Natural killer cell (primary cell): ENCODE measurements at regions of chr17 and their contacts with region 1.

Region 1: DNA sequence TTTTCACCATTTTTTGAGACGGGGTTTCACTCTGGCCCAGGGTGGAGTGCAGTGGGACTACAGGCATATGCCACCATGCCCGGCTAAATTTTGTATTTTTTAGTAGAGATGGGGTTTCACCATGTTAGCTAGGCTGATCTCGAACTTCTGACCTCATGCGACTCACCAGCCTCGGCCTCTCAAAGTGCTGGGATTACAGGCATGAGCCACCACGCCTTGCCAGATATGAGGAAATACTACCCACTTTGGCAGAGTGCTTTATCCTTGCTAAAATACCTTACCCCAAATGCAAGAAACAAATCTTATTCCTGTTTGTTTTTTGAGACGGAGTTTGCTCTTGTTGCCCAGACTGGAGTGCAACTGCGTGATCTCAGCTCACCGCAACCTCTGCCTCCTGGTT is 62.9 kb upstream of the MGAT5B start:
- DNase-seq: no peak
- ATAC-seq: no peak
- H3K4me3 ChIP-seq: no peak overlapping the region
- H3K4me3 Mint-ChIP-seq: no peak overlapping the region
- H3K27ac ChIP-seq: no peak overlapping the region
- H3K27ac Mint-ChIP-seq: no peak overlapping the region
- H3K4me1 ChIP-seq: no peaks in the 10 kb centered on the region
- H3K4me1 Mint-ChIP-seq: no peaks in the 10 kb centered on the region
- H3K27me3 ChIP-seq: no peaks in the 10 kb centered on the region
- H3K27me3 Mint-ChIP-seq: no peaks in the 10 kb centered on the region
- CTCF ChIP-seq: no peak

Region 2: DNA sequence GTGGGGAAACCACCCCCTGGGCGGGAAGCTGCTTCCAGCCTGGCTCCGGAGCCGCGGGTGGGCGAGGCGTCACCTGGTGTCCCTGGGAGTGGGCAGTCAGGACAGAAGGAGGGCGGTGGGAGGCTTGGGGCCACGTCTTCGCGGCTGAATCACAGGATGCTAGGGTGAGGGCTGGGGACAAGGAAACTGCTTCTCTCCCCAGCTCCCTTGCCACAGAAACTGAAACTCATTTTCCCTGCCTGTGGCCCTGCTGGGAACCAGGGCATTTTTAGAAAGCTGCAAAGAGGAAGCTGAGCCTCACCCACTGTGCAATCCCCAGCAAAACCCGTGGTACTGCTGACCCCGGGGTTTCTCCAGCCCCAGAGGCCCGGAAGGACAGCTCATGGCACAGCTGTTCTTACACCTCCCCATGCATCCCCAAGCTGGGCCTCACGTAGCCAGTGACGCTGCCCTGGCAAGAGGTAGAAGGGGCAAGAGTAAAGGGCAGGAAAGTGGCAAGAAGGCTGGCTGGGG is 312.3 kb before region 1 on chr17:
- intact Hi-C with region 1: no loop called
- DNase-seq: peak; percentile 59 to 69
- ATAC-seq: peak; percentile 61 to 75 (median 65)
- H3K4me3 ChIP-seq: peak overlapping the region; percentile 25
- H3K4me3 Mint-ChIP-seq: peak overlapping the region; percentile 89
- H3K27ac ChIP-seq: peak overlapping the region; percentile 90
- H3K27ac Mint-ChIP-seq: peak overlapping the region; percentile 96 to 97
- H3K4me1 ChIP-seq: peaks cover 95% of the 10 kb centered on the region
- H3K4me1 Mint-ChIP-seq: peaks cover 64 to 86% of the 10 kb centered on the region in 2 donors
- H3K27me3 ChIP-seq: no peaks in the 10 kb centered on the region
- H3K27me3 Mint-ChIP-seq: no peaks in the 10 kb centered on the region
- CTCF ChIP-seq: no peak

Region 3: GRCh38 chr17:76775021-76775600 is 30.2 kb before region 1 on chr17:
- intact Hi-C with region 1: loop called (anchors 2 kb)
- DNase-seq: no peak
- ATAC-seq: no peak
- H3K4me3 ChIP-seq: no peak overlapping the region
- H3K4me3 Mint-ChIP-seq: no peak overlapping the region
- H3K27ac ChIP-seq: no peak overlapping the region
- H3K27ac Mint-ChIP-seq: no peak overlapping the region
- H3K4me1 ChIP-seq: peaks cover 16% of the 10 kb centered on the region
- H3K4me1 Mint-ChIP-seq: peaks cover 10 to 15% of the 10 kb centered on the region in 2 donors
- H3K27me3 ChIP-seq: no peaks in the 10 kb centered on the region
- H3K27me3 Mint-ChIP-seq: no peaks in the 10 kb centered on the region
- CTCF ChIP-seq: no peak

Region 4: DNA sequence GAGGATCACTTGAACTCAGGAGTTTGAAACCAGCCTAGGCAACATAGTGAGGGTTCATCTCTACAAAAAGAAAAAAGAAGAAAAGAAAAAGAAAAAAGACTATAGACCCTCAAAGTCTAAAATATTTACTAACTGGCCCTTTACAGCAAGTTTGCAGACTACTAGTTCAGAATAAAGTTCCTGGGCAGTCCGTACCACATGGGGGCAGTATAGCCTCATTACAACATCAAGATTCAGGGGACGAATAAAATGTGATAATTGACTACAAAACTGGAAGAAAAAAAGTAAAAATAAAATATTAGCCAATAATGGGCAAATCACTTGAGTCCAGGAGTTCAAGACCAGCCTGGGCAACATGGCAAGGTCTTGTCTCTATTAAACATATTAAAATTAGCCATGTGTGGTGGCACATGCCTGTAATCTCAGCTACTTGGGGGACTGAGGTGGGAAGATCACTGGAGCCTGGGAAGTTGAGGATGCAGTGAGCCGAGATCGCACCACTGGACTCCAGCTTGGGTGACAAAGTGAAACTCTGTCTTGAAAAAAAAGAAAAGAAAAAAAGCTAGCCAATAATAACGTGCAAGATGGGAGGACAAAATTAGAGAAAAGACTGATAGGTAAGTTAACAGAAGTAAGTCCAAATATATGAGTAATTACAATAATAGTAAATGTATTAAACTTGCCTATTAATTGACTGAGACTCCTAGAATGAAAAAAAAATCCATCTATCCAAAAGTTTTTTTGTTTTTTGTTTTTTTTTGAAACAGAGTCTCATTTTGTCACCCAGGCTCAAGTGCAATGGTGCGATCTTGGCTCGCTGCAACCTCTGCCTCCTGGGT is 206.1 kb after region 1 on chr17:
- intact Hi-C with region 1: no loop called
- DNase-seq: peak; percentile 24 to 77
- ATAC-seq: peak in 2 of 3 donors; percentile 53 to 56
- H3K4me3 ChIP-seq: no peak overlapping the region
- H3K4me3 Mint-ChIP-seq: no peak overlapping the region
- H3K27ac ChIP-seq: no peak overlapping the region
- H3K27ac Mint-ChIP-seq: no peak overlapping the region
- H3K4me1 ChIP-seq: no peaks in the 10 kb centered on the region
- H3K4me1 Mint-ChIP-seq: no peaks in the 10 kb centered on the region
- H3K27me3 ChIP-seq: no peaks in the 10 kb centered on the region
- H3K27me3 Mint-ChIP-seq: peaks cover 0 to 10% of the 10 kb centered on the region in 2 donors
- CTCF ChIP-seq: peak; percentile 66